Activated CD8-positive, alpha-beta memory T cell treated with anti-CD3 and anti-CD28 coated beads, Interleukin-2, amount 10 ng/mL, durations not matched to agents 7 days and 5 days (primary cell): ENCODE measurements at regions of chrX and their contacts with region 1.

Region 1: GRCh38 chrX:65595460-65595876 is 60.9 kb upstream of the LAS1L start:
- DNase-seq: peak; percentile 97
- ATAC-seq: peak; percentile 75
- H3K4me3 Mint-ChIP-seq: peak overlapping the region; percentile 62
- H3K27ac Mint-ChIP-seq: peak overlapping the region; percentile 97
- H3K4me1 Mint-ChIP-seq: peaks cover 53% of the 10 kb centered on the region
- H3K27me3 Mint-ChIP-seq: no peaks in the 10 kb centered on the region

Region 2: DNA sequence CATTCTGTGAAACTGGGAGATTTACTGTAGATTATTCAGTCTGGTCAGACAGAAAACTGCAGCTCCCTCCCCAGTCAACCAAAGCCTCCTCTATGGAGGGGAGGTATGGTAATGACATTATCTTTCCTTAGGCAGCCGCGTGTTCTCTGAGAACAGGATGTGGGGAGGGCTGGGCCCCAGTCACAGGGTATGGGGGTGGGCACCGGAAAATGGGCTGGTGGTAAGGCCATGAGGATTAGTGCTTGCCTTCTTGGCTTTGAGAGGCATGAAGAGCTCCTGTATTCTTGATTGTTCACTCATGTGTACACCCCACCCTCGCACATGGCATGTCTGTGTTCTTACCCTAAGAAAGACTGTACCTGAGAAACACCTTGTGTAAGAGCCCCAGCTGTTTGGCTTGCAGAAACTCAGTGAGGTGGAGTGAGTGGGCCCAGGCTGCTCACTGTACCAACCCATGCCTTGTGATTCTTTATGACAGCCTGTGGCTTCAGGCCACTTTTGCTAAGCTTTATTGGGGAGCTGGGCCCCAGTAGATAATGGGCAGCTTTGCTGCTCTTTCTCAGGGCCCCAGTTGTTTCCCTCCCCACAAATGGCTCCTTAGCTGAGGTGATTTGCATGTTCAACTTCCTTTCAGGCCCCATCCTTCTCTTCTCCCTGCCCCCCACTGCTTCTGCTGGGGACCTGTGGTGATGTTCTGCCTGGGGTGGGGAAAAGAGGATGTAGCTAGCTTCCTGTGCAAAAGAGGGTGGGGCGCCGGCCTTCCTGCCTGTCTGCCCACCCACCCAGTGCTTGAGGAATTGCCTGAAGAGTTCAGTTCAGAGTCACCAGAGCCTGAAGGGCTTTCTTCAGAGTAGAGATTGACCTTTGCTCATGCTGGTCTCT is 102.7 kb after region 1 on chrX:
- CTCF ChIA-PET with region 1: interaction called, 18 read pairs
- DNase-seq: peak; percentile 89
- ATAC-seq: peak; percentile 72
- H3K4me3 Mint-ChIP-seq: peak overlapping the region; percentile 67
- H3K27ac Mint-ChIP-seq: peak overlapping the region; percentile 97
- H3K4me1 Mint-ChIP-seq: peaks cover 84% of the 10 kb centered on the region
- H3K27me3 Mint-ChIP-seq: no peaks in the 10 kb centered on the region